ENCODE measurements at regions of chr1 and their contacts with region 1.

Region 1: GRCh38 chr1:26500488-26501175 is 28.4 kb downstream of the HMGN2 start:
- DNase-seq: peak; percentile 97

Region 2: GRCh38 chr1:26081267-26082019 is 419.2 kb before region 1 on chr1:
- intact Hi-C with region 1: no loop called
- DNase-seq: no peak

Region 3: DNA sequence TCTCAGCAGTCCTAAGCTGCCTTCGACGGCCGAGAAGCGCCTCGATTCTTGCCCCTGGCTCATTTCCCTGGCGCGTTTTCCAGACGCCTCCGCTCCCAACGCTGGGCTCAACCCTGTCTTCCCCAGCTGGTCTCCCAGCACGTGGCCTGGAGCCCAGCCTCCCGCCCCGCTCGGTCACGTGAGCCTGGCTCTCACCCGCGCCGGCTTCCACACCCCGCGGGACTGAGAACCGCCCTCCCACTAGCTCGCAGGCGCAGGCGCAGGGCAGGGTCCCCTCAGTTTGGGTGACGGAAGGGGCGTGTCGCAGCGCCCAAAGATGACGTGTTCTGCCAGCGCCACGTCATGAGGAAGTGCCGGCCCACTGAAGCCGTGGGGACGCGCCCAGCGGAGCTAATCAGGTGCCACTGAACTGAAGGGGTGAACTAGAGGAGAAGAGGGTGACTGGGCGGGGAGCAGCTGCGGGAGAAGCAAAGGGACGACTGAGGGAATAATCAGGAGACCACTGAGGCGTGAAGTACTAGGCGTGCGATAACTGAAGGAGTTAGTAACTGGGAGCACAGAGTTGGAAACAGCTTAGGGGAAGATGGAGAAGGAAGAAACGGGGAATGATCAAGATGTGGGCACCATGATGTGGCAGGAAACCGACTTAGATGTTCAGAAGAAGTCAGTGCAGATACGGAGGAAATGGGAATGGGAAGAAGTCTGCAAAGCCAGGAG is 68.5 kb before region 1 on chr1 and contains the start of gene DHDDS:
- intact Hi-C with region 1: loop called (anchors 2 kb)
- DNase-seq: peak; percentile 98
- total RNA-seq, gene DHDDS: 34.9 TPM

Region 4: GRCh38 chr1:26593385-26593784 is 92.8 kb after region 1 on chr1:
- intact Hi-C with region 1: no loop called
- DNase-seq: no peak